Ovary (tissue), 10 donors: ENCODE measurements at regions of chr7 and their contacts with region 1.

Region 1: DNA sequence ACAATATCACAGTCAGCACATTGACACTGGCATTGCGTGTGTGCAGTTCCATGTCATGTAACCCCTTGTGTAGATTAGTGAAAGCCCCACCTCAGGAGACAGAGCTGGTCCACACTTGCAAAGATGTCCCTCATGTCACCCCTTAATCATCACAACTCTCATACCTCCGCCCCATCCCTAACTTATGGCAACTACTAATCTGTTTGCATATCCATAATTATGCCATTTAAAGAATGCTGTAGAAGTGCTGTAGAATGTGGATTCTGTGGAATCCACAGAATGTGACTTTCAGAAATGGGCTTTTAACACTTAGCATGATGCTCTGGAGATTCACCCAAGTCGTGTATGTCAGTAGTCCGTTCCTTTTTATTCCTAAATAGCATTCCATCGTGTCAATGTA is 102.8 kb upstream of the VSTM2A start:
- DNase-seq: no peak
- H3K4me3 ChIP-seq: no peak overlapping the region
- H3K27ac ChIP-seq: no peak overlapping the region
- H3K4me1 ChIP-seq: no peaks in the 10 kb centered on the region
- H3K27me3 ChIP-seq: no peaks in the 10 kb centered on the region
- CTCF ChIP-seq: no peak
- EP300 ChIP-seq: no peak
- POLR2A ChIP-seq: no peak

Region 2: GRCh38 chr7:54632696-54633095 is 193.3 kb after region 1 on chr7:
- intact Hi-C with region 1: loop called in 1 of 4 experiments (anchors 2 kb)
- DNase-seq: no peak
- H3K4me3 ChIP-seq: no peak overlapping the region
- H3K27ac ChIP-seq: no peak overlapping the region
- H3K4me1 ChIP-seq: no peaks in the 10 kb centered on the region
- H3K27me3 ChIP-seq: no peaks in the 10 kb centered on the region
- CTCF ChIP-seq: no peak
- EP300 ChIP-seq: no peak
- POLR2A ChIP-seq: no peak